Adrenal gland (tissue), 19 donors: ENCODE measurements at regions of chr6 and their contacts with region 1.

Region 1: GRCh38 chr6:31139599-31139998 is 733 bp upstream of the PSORS1C2 start:
- DNase-seq: no peak
- H3K4me3 ChIP-seq: no peak overlapping the region
- H3K27ac ChIP-seq: no peak overlapping the region
- H3K4me1 ChIP-seq: peaks cover 0 to 4% of the 10 kb centered on the region in 2 donors
- H3K27me3 ChIP-seq: no peaks in the 10 kb centered on the region
- CTCF ChIP-seq: no peak
- POLR2A ChIP-seq: no peak

Region 2: DNA sequence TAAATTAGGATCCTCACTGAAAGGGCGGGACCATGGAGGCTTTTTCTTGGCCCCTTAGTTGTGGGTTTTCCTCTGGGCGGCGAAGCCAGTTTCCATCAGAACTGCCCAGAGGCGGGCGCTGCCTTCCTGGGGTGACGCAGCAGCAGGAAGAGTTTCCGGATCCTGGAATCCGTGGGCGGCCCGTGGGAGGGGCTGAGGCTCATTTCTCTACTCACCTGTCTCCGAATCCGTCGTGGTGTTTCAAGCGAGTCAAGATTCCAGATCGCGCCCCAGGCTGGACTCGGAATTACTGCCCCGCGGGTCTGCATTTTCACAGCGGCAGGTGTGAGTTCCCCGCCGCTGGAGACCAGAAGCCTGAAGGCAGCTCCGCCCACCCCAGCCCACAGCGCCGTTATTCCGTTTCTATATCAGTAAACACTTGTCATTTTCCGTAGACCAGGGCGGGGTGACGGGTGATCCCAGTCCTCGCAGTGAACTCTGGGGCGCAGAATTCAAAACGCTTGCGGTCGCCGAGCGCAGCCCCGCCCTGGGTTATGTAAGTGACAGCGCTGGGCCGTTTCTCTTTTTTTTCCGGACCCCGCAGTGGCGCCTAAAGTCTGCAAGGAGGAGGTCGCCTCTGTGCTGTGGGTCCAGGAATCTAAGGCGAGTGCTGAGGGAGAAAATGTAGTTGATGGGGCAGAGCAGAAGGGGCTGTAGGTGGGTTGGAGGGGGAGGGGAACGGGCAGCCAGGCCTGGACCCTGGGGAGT is 58.1 kb after region 1 on chr6:
- intact Hi-C with region 1: loop called (anchors 2 to 5 kb)
- DNase-seq: peak; percentile 88 to 97 (median 94)
- H3K4me3 ChIP-seq: peak overlapping the region; percentile 61 to 83 (median 70)
- H3K27ac ChIP-seq: peak overlapping the region; percentile 84 to 98 (median 94)
- H3K4me1 ChIP-seq: no peaks in the 10 kb centered on the region
- H3K27me3 ChIP-seq: no peaks in the 10 kb centered on the region
- CTCF ChIP-seq: no peak
- POLR2A ChIP-seq: peak in 1 of 2 donors; percentile 78

Region 3: DNA sequence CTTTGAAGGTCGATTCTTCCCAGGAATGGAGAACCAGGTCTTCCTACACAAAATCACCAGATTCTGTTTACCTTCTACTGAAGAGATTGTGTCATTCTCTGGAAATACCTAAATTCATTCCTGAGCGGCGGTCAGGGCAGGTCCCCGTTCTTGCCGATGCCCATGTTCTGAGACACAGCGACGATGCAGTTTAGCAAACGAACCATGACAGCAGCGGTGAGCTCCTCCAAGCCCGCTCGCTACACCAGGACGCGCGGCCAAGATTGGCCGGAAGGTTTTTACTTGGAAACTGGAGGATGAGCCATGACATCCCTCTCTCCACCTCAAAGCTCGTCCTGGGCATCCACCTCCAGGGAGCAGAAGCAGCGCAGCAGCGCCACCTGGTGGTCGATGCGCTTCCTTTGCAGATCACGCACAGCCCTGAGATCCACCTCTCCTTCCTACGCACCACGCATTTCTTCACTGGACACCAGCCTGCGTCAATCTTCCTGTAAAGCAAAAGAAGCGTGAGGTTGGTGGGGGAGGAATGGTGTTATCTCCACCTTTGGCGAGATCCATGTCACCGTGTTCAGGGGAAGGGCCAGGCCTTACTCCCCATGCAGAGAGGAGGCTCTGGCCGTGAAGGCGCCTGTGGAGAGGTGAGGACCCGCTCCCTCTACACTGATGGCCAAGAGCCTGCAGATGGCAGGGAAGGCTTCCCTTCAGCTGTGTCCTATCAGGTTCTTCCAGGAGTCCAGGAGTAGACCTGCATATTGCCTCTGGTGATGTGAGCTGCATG is 227.3 kb after region 1 on chr6:
- intact Hi-C with region 1: loop called in 1 of 2 experiments (anchors 5 kb)
- DNase-seq: peak; percentile 88 to 93 (median 90)
- H3K4me3 ChIP-seq: no peak overlapping the region
- H3K27ac ChIP-seq: no peak overlapping the region
- H3K4me1 ChIP-seq: no peaks in the 10 kb centered on the region
- H3K27me3 ChIP-seq: peaks cover 3% of the 10 kb centered on the region
- CTCF ChIP-seq: peak; percentile 91 to 97 (median 96)
- POLR2A ChIP-seq: no peak

Region 4: GRCh38 chr6:31379850-31380249 is 240.3 kb after region 1 on chr6:
- intact Hi-C with region 1: loop called in 1 of 2 experiments (anchors 5 kb)
- DNase-seq: peak in 4 of 7 donors; percentile 64 to 79 (median 66)
- H3K4me3 ChIP-seq: no peak overlapping the region
- H3K27ac ChIP-seq: no peak overlapping the region
- H3K4me1 ChIP-seq: no peaks in the 10 kb centered on the region
- H3K27me3 ChIP-seq: peaks cover 5% of the 10 kb centered on the region
- CTCF ChIP-seq: no peak
- POLR2A ChIP-seq: no peak